Left colon (tissue), 2 donors: ENCODE measurements at regions of chr16 and their contacts with region 1.

Region 1: GRCh38 chr16:11977376-11978041 is 975 bp downstream of the SNX29 start:
- DNase-seq: no peak
- ATAC-seq: no peak

Region 2: GRCh38 chr16:11915644-11916523 is 61.6 kb before region 1 on chr16 and contains the start of gene GSPT1:
- intact Hi-C with region 1: loop called in 1 of 2 experiments (anchors 10 kb)
- DNase-seq: peak; percentile 99
- ATAC-seq: peak; percentile 85
- total RNA-seq, gene GSPT1: 105 to 121 TPM